GM10248 (cell line): ENCODE measurements at regions of chr10 and their contacts with region 1.

Region 1: GRCh38 chr10:103712570-103713498 is 142.5 kb downstream of the SH3PXD2A start:
- DNase-seq: peak; percentile 78
- CTCF ChIP-seq: peak; percentile 88

Region 2: DNA sequence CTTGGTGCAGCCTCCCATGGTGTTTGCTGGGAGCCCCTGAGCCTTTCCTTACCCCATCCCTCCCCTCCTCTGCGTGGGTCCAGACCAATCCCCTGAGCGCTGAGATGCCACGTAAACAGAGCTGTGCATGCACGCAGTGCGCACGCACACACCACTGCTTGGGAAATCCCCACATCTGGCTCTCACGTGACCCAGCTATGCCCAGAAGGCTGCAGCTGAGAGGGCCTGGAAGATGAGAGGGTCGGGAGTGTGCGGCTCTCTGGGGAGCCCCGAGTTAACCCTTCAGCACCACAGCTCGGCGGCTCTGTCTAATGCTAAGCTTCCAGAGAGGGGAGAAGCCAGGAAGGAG is 34.7 kb before region 1 on chr10:
- CTCF ChIA-PET with region 1: interaction called, 12 read pairs
- POLR2A ChIA-PET with region 1: no interaction called
- DNase-seq: peak; percentile 93
- CTCF ChIP-seq: no peak

Region 3: DNA sequence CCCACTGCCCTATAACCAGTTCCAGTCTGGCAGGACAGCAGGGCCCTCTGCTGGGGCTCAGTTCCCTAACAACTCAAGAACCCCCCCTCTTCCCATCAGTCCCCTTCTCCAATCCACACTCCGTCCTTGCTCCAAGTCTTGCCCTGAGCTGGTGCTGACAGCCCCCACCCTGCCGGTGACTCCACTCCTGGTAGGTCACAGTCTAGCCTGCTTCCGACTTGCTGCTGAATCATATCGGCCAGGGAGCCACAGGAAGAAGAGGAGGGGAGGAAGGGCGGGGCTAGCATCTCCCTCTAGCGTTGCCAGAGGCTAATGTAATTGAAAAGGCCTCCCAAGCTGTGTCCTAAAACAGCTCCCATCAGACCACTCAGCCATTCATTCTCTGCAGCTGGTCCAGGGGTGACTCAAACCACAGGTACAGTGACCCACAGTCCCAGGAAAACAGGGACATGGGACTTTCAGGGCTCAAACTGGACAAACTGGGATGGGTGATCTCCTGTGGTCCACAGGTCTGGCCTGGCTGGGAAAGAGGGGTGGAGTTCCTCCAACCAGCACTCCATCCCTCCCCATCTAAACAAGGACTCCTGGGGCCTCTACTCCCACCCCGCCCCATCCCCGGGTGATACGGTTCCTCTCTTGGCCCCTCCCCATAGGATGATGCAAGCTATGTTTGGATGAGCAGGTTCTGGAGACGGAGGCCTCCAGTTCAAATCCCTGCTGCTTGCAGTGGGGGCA is 16.3 kb before region 1 on chr10:
- CTCF ChIA-PET with region 1: interaction called, 26 read pairs
- POLR2A ChIA-PET with region 1: no interaction called
- DNase-seq: peak; percentile 82
- CTCF ChIP-seq: peak; percentile 23

Region 4: GRCh38 chr10:103727546-103727963 is 14.7 kb after region 1 on chr10:
- CTCF ChIA-PET with region 1: interaction called, 52 read pairs
- POLR2A ChIA-PET with region 1: no interaction called
- DNase-seq: no peak
- CTCF ChIP-seq: no peak

Region 5: DNA sequence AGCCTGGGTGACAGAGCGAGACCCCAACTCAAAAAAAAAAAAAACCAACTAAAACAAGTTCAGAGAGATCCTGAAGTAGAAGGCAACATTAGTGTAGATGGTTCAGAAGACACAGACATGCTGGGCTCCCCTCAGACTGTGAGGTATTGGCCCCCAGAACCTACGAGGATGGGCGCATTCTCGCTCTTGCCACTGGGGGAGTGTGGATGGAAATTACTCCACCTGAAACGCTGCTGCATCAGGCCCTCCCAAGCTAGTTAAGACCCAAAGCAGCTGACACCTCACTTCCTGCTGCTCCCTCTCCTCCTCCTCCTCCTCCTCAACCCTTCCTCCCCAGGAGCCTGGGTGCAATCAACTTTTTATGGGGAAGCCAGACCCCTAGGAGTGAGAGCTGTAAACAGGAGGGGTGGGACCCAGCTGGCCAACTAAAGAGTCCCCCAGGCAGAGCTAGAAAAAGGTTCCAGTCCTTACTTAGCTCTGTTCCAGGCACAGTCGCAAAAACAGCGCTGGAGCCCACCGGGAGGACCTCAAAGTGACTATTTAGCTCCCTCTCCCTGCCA is 135.2 kb after region 1 on chr10:
- CTCF ChIA-PET with region 1: interaction called, 41 read pairs
- POLR2A ChIA-PET with region 1: no interaction called
- DNase-seq: no peak
- CTCF ChIP-seq: no peak

Region 6: GRCh38 chr10:103859161-103860086 is 146.6 kb after region 1 on chr10:
- CTCF ChIA-PET with region 1: interaction called, 66 read pairs
- POLR2A ChIA-PET with region 1: no interaction called
- DNase-seq: peak; percentile 60
- CTCF ChIP-seq: peak; percentile 46

Region 7: GRCh38 chr10:103888113-103888841 is 175.4 kb after region 1 on chr10:
- CTCF ChIA-PET with region 1: interaction called, 79 read pairs
- POLR2A ChIA-PET with region 1: no interaction called
- DNase-seq: peak; percentile 53
- CTCF ChIP-seq: peak; percentile 77